Prostate gland (tissue), 2 donors: ENCODE measurements at regions of chr15 and their contacts with region 1.

Region 1: DNA sequence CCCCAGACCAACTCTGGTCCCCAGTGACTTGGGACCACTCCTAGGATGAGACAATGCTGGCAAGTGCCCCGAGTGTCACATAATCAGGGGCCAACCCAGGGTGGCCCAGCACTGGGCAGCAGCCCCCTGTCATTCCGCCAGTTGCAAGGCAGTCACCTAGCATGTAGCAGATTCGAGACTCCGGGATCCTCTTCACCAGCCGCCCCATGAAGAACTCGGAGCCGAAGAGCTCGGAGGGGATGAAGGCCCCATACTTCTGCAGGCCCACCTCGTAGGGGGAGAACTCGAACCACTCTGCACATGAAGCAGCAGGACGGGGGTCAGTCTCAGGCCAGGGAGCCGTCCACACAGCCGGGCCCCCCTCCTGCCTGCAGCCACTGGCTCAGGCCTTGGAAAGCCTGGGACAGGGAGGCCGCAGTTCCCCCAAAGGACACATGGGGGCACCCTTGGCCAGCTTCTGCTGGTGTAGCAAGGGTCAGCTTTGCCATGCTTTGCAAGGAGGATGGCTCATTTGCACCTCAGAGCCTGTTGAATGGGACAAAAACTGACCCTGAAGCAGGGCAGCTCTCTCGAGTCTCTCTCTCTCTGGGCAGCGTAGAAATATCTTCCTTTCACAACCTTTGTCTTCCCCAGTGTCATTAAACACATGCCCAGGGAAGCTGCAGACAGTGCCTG is 17.0 kb upstream of the EHD4 start:
- DNase-seq: peak; percentile 76
- H3K4me3 ChIP-seq: no peak overlapping the region
- H3K27ac ChIP-seq: no peak overlapping the region
- H3K4me1 ChIP-seq: no peaks in the 10 kb centered on the region
- H3K27me3 ChIP-seq: no peaks in the 10 kb centered on the region
- CTCF ChIP-seq: peak; percentile 92 to 99 (median 97)
- POLR2A ChIP-seq: no peak

Region 2: DNA sequence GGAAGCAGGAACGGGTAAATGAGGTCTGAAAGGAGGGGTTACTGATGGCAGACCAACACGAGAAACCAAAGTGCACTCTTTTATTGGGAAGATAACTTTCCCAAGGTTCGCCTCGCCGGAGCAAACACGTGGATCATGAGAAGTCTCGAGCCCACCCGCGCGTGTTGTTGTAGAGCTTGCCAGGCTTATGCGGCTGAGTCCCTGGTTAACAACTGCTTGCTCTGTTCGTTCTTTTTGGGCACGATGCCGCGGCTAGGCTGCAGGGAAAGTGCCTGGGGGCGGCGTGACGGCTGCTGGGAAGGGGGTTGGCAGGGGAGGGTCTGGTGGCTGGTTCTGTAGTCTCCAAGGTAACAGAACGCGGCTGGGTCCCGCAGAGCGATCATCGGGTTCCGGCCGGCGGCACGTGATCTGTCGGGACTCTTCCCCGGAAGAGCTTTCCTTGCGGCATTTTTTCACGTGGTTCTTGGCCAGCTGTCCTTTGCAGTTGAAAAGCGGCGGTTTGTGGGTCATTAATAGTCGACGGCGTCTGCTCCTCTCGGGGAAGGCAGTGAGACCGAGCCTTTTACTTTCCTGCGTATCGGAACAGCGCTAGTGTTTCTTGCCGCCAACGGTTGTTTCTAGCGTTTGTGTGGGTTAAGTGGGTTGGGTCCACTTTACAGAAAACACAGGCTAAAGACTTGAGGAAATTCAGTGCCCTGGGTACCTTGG is 327.7 kb before region 1 on chr15:
- intact Hi-C with region 1: no loop called
- DNase-seq: peak; percentile 63
- H3K4me3 ChIP-seq: peak overlapping the region; percentile 38 to 50
- H3K27ac ChIP-seq: peak overlapping the region; percentile 56 to 66
- H3K4me1 ChIP-seq: no peaks in the 10 kb centered on the region
- H3K27me3 ChIP-seq: no peaks in the 10 kb centered on the region
- CTCF ChIP-seq: no peak
- POLR2A ChIP-seq: no peak

Region 3: GRCh38 chr15:42046579-42046978 is 57.2 kb after region 1 on chr15:
- intact Hi-C with region 1: no loop called
- DNase-seq: peak; percentile 79
- H3K4me3 ChIP-seq: no peak overlapping the region
- H3K27ac ChIP-seq: peak overlapping the region; percentile 56 to 68
- H3K4me1 ChIP-seq: peaks cover 4% of the 10 kb centered on the region
- H3K27me3 ChIP-seq: no peaks in the 10 kb centered on the region
- CTCF ChIP-seq: no peak
- POLR2A ChIP-seq: no peak

Region 4: GRCh38 chr15:42056934-42057779 is 67.8 kb after region 1 on chr15:
- intact Hi-C with region 1: loop called (anchors 1 kb)
- DNase-seq: peak; percentile 97
- H3K4me3 ChIP-seq: peak overlapping the region in 1 of 2 donors; percentile 7
- H3K27ac ChIP-seq: peak overlapping the region; percentile 83 to 85
- H3K4me1 ChIP-seq: peaks cover 6% of the 10 kb centered on the region
- H3K27me3 ChIP-seq: no peaks in the 10 kb centered on the region
- CTCF ChIP-seq: peak in 3 of 4 experiments; percentile 54 to 83 (median 75)
- POLR2A ChIP-seq: peak; percentile 55

Region 5: GRCh38 chr15:42364529-42364928 is 375.1 kb after region 1 on chr15:
- intact Hi-C with region 1: no loop called
- DNase-seq: peak; percentile 12
- H3K4me3 ChIP-seq: no peak overlapping the region
- H3K27ac ChIP-seq: no peak overlapping the region
- H3K4me1 ChIP-seq: no peaks in the 10 kb centered on the region
- H3K27me3 ChIP-seq: no peaks in the 10 kb centered on the region
- CTCF ChIP-seq: no peak
- POLR2A ChIP-seq: no peak